Transverse colon (tissue), 4 donors: ENCODE measurements at regions of chr2 and their contacts with region 1.

Region 1: GRCh38 chr2:22355816-22356433 is 1029.1 kb upstream of the KLHL29 start:
- DNase-seq: peak; percentile 54
- H3K4me3 ChIP-seq: no peak overlapping the region
- H3K27ac ChIP-seq: no peak overlapping the region
- H3K4me1 ChIP-seq: no peaks in the 10 kb centered on the region
- H3K27me3 ChIP-seq: no peaks in the 10 kb centered on the region
- CTCF ChIP-seq: peak; percentile 58 to 92 (median 85)
- EP300 ChIP-seq: no peak
- POLR2A ChIP-seq: no peak

Region 2: DNA sequence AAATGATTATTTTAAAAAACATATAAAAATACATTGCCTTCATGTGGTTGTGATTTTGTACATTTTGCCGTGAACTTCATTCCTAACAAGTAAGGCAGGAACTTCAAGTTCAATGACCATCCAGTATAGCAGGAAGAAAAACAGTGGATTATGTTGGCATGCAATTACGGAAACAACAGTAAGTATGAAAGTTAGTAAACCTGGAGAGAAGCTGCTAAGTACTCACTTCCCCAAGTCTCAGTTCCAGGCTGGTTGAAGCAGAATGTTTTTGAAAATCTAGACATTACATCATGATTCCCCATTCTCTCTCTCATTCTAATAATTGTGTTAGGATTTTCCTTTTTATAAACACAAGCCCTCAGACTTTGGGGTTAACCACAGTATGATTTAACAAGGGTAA is 41.9 kb after region 1 on chr2:
- in situ Hi-C with region 1: no loop called
- intact Hi-C with region 1: no loop called
- DNase-seq: no peak
- H3K4me3 ChIP-seq: no peak overlapping the region
- H3K27ac ChIP-seq: no peak overlapping the region
- H3K4me1 ChIP-seq: no peaks in the 10 kb centered on the region
- H3K27me3 ChIP-seq: no peaks in the 10 kb centered on the region
- CTCF ChIP-seq: no peak
- EP300 ChIP-seq: no peak
- POLR2A ChIP-seq: no peak

Region 3: DNA sequence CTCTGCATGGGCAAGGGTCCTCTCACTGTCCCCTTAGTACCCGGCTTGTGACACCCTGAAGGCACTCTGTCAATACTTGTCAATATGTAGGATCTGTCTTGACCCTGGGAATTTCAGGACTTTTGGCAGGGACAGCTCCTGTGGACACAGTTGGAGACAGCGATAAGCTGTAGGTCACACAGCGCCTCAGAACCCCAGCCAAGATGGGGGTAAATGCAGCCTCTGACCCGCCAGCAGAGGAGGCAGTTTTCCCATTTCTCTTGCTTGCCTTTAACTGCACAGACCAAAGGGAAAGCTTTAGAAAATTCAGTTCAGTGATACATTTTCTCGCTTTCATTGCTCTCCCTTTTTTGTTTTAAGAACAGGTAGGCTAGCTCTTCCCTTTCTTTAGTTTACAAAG is 974.3 kb after region 1 on chr2:
- in situ Hi-C with region 1: loop called in 2 of 4 experiments (anchors 25 kb)
- intact Hi-C with region 1: no loop called
- DNase-seq: no peak
- H3K4me3 ChIP-seq: no peak overlapping the region
- H3K27ac ChIP-seq: no peak overlapping the region
- H3K4me1 ChIP-seq: peaks cover 0 to 4% (median 0%) of the 10 kb centered on the region in 4 donors
- H3K27me3 ChIP-seq: no peaks in the 10 kb centered on the region
- CTCF ChIP-seq: no peak
- EP300 ChIP-seq: no peak
- POLR2A ChIP-seq: no peak